ENCODE measurements at regions of chr16 and their contacts with region 1.

Region 1: GRCh38 chr16:11535471-11535870 is 51.2 kb downstream of the LITAF start:
- DNase-seq: no peak
- ATAC-seq: no peak
- H3K4me3 ChIP-seq: no peak overlapping the region
- H3K27ac ChIP-seq: no peak overlapping the region
- H3K4me1 ChIP-seq: no peaks in the 10 kb centered on the region
- H3K27me3 ChIP-seq: no peaks in the 10 kb centered on the region; a peak in 1 of 4 replicates
- CTCF ChIP-seq: no peak
- EP300 ChIP-seq: no peak
- POLR2A ChIP-seq: no peak
- RAD21 ChIP-seq: no peak

Region 2: GRCh38 chr16:11201498-11202259 is 333.8 kb before region 1 on chr16:
- CTCF ChIA-PET with region 1: no interaction called
- POLR2A ChIA-PET with region 1: no interaction called
- RAD21 ChIA-PET with region 1: no interaction called
- SMC1A ChIA-PET with region 1: no interaction called
- in situ Hi-C with region 1: no loop called
- intact Hi-C with region 1: no loop called
- DNase-seq: no peak
- ATAC-seq: peak; percentile 5
- H3K4me3 ChIP-seq: no peak overlapping the region
- H3K27ac ChIP-seq: peak overlapping the region; percentile 45
- H3K4me1 ChIP-seq: peaks cover 67% of the 10 kb centered on the region
- H3K27me3 ChIP-seq: no peaks in the 10 kb centered on the region
- CTCF ChIP-seq: no peak
- EP300 ChIP-seq: peak in 1 of 2 experiments; percentile 28; a peak in 1 of 4 replicates
- POLR2A ChIP-seq: no peak
- RAD21 ChIP-seq: no peak

Region 3: DNA sequence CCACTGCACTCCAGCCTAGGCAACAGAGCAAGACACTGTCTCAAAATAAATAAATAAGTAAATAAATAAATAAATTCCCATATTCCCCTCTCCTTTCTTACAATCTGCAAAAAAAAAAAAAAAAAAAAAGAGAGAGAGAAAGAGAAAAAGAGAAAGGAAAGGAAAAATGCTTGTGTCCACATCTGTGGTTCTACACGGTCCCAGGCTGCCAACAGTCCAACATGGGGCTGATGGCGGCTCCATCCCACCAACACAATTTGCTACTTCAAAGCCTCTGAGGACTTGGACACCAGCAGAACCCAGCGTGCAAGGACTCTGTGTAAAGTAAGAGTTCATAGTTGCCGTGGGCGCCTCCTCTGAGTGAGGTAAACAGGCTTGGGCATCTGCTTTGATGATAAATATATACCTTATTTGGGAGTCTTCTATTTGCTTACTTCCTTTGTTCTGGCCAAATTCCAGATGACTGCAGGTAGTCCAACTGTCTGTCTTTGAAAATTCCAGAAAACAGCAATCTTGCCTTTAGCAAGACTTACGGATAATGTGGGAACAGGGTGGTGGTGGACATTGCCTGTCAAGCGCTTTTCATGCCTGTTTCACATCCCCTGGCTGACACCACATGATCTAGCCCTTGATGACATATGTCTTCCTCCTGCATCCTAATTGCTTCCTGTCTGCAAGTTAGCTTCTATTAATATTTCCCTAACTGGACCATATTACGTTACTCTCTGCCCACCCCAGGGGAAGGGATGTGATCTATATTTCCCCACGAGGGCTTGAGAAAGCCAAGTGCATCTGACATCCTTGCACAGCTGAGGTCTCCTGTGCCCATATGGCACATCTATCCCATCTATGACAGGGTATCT is 41.2 kb after region 1 on chr16:
- CTCF ChIA-PET with region 1: interaction called, 22 read pairs
- POLR2A ChIA-PET with region 1: no interaction called
- RAD21 ChIA-PET with region 1: no interaction called
- SMC1A ChIA-PET with region 1: interaction called, 18 read pairs
- in situ Hi-C with region 1: no loop called
- intact Hi-C with region 1: loop called (anchors 5 kb)
- DNase-seq: peak; percentile 82
- ATAC-seq: peak; percentile 77
- H3K4me3 ChIP-seq: no peak overlapping the region
- H3K27ac ChIP-seq: peak overlapping the region; percentile 46; the same call in 1 of the 2 replicates
- H3K4me1 ChIP-seq: peaks cover 57% of the 10 kb centered on the region
- H3K27me3 ChIP-seq: no peaks in the 10 kb centered on the region
- CTCF ChIP-seq: no peak
- EP300 ChIP-seq: peak; percentile 78 to 79; a peak in 3 of 4 replicates
- POLR2A ChIP-seq: no peak
- RAD21 ChIP-seq: no peak

Region 4: DNA sequence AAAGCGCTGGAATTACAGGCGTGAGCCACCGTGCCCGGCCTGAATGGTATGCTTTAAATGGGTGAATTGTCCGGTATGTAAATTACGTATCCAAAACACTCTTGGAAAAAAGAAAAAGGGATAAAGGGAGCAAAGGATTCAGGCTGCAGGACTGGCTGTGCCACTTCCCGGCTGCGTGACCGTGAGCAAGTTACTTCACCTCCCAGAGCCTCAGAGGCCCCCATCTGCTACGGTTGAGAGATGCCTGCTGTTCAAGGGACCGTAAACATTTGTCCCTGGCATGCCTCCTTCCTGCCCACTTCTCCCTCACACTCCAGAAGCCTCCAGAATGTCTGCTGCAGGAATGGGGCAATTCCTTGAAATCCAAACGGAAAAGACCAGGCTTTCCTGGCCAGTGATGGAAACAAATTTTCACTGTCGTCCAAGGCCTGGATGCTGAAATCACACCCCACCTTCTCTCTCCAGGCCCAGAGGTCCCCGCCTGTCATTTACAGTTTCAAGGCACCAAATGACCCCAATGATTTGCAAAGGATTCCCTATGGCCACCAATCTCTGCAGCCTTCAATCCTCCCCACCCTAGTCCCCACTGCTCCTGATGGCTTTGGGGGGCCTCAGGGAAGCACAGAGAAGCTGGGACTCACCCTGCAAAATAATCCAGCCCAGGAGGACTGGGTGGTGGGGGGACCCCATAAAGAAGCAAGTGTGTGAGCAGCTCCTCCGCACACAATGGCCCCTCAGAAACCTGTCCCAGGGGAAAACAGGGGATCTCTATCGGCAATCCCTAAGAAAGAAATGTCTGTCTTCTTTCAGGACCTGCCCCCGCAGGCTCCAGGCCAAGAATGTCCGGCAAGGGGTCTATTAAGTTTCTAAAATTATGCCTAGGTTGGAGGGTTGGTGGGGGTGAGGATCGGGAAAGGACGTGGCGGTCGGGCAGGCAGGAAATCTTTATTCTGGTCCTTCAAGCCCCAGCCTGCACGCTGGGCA is 74.3 kb after region 1 on chr16:
- CTCF ChIA-PET with region 1: interaction called, 15 read pairs
- POLR2A ChIA-PET with region 1: interaction called, 7 read pairs
- RAD21 ChIA-PET with region 1: interaction called, 4 read pairs
- SMC1A ChIA-PET with region 1: interaction called, 5 read pairs
- in situ Hi-C with region 1: no loop called
- intact Hi-C with region 1: no loop called
- DNase-seq: no peak
- ATAC-seq: no peak
- H3K4me3 ChIP-seq: no peak overlapping the region
- H3K27ac ChIP-seq: no peak overlapping the region
- H3K4me1 ChIP-seq: peaks cover 27% of the 10 kb centered on the region
- H3K27me3 ChIP-seq: no peaks in the 10 kb centered on the region; a peak in 1 of 4 replicates
- CTCF ChIP-seq: no peak
- EP300 ChIP-seq: no peak
- POLR2A ChIP-seq: no peak
- RAD21 ChIP-seq: no peak

Region 5: GRCh38 chr16:11639925-11640899 is 104.7 kb after region 1 on chr16:
- CTCF ChIA-PET with region 1: interaction called, 99 read pairs
- POLR2A ChIA-PET with region 1: interaction called, 3 read pairs
- RAD21 ChIA-PET with region 1: interaction called, 44 read pairs
- SMC1A ChIA-PET with region 1: interaction called, 32 read pairs
- in situ Hi-C with region 1: loop called (anchors 5 kb)
- intact Hi-C with region 1: loop called (anchors 1 kb)
- DNase-seq: no peak
- ATAC-seq: peak; percentile 15; the same call in 1 of the 3 replicates
- H3K4me3 ChIP-seq: no peak overlapping the region
- H3K27ac ChIP-seq: no peak overlapping the region
- H3K4me1 ChIP-seq: no peaks in the 10 kb centered on the region
- H3K27me3 ChIP-seq: no peaks in the 10 kb centered on the region; a peak in 1 of 4 replicates
- CTCF ChIP-seq: no peak
- EP300 ChIP-seq: no peak
- POLR2A ChIP-seq: no peak
- RAD21 ChIP-seq: no peak

Region 6: GRCh38 chr16:11715246-11715947 is 179.9 kb after region 1 on chr16:
- CTCF ChIA-PET with region 1: interaction called, 35 read pairs
- POLR2A ChIA-PET with region 1: no interaction called
- RAD21 ChIA-PET with region 1: interaction called, 12 read pairs
- SMC1A ChIA-PET with region 1: interaction called, 7 read pairs
- in situ Hi-C with region 1: loop called (anchors 5 kb)
- intact Hi-C with region 1: loop called (anchors 2 kb)
- DNase-seq: no peak
- ATAC-seq: peak; percentile 80
- H3K4me3 ChIP-seq: no peak overlapping the region
- H3K27ac ChIP-seq: peak overlapping the region; percentile 48; the same call in 1 of the 2 replicates
- H3K4me1 ChIP-seq: peaks cover 16% of the 10 kb centered on the region
- H3K27me3 ChIP-seq: no peaks in the 10 kb centered on the region
- CTCF ChIP-seq: 0 out of 6 replicates have a peak, but pooled peaks of 1 of the 3 experiments have one; percentile 3
- EP300 ChIP-seq: no peak
- POLR2A ChIP-seq: no peak
- RAD21 ChIP-seq: peak; percentile 36

Measured in GM12878 (cell line).